Posterior vena cava (tissue), 2 donors: ENCODE measurements at regions of chr9 and their contacts with region 1.

Region 1: DNA sequence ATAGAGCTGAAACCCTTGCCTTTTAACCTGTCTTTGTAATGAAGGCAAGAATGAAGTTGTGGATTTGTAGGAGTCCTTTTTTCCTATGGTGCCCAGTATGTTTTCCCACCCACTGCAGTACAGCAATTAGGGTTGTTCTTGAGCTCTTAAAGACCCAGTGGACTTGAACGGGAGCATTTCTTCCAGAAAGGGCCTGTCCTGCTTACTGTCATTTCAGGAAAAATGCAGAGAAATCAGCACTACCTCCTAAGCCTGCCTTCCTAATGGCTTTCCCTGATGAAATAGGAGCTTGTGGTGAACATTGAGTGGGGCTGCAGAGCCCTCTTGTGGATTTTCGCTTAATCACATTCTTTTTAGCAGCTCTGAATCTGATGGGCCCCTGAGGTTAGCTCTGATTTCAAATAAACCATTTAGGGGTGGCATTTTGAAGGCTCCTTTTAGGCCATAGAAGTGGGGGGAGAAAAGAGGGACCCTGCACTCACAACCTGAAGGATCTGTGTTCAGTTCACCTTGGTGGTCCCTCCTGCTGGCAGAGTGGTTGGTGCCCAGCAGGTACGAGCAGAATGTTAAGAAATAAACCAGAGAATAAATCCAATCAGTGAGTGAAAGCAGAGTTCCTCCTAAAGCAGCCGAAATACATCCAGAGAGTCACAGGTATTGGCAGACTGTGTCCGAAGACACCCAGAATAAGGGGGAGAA is 188.0 kb upstream of the KLF9 start:
- DNase-seq: no peak

Region 2: DNA sequence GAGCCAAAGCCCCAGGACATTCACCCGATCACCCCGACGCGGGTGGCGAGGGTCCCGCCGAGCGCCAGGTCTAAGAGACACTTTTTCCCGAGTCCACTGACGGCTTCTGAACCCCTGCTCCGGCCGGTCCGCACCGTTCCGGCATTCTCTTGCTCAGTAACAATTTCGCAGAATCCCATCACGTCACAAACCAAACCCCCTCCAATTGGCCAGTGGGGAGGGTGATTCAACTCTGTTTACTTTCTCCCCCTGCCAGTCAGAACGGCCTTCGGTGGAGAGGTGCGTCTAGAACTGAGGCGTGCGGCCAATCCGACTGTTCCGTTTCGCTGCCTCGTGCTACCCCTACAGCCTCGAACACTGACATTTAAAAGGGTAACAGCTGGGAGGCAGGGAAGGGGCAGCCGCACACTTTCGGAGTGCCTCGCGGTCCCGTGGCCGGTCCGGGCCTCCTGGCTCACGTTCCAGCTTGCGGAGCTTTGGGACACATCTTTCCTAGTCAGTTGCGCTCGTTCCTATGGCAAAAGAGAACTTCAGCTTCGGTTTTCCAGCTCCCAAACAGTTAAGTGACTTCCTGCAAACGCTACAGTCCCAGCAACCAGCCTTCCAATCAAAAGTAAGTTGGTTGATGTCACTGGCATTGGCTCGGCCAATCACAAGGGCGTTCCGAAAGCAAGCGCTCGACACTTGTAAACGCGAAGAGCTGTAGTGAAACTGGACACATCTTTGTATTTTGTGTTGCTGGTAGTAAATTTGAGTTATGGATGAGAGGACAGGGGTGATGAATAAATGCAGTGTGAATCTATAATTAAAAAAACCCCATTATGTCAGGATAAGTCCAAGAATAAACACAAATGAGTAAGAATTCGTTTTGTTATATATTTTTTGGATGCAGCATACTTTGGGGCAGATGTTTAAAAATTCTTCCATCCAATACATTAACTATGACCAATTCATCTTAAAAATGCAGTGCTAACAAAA is 188.4 kb before region 1 on chr9 and contains the start of gene KLF9:
- intact Hi-C with region 1: loop called (anchors 1 to 10 kb)
- DNase-seq: peak; percentile 98
- total RNA-seq, gene KLF9: 87.1 to 104 TPM